GM10248 (cell line): ENCODE measurements at regions of chr16 and their contacts with region 1.

Region 1: GRCh38 chr16:77236063-77236511 is 36.9 kb downstream of the SYCE1L start:
- DNase-seq: peak; percentile 87
- CTCF ChIP-seq: peak; percentile 98

Region 2: GRCh38 chr16:77223184-77223583 is 12.9 kb before region 1 on chr16:
- CTCF ChIA-PET with region 1: interaction called, 17 read pairs
- POLR2A ChIA-PET with region 1: no interaction called
- DNase-seq: no peak
- CTCF ChIP-seq: peak; percentile 35

Region 3: GRCh38 chr16:77246150-77246549 is 10.1 kb after region 1 on chr16:
- CTCF ChIA-PET with region 1: interaction called, 20 read pairs
- POLR2A ChIA-PET with region 1: no interaction called
- DNase-seq: no peak
- CTCF ChIP-seq: no peak

Region 4: DNA sequence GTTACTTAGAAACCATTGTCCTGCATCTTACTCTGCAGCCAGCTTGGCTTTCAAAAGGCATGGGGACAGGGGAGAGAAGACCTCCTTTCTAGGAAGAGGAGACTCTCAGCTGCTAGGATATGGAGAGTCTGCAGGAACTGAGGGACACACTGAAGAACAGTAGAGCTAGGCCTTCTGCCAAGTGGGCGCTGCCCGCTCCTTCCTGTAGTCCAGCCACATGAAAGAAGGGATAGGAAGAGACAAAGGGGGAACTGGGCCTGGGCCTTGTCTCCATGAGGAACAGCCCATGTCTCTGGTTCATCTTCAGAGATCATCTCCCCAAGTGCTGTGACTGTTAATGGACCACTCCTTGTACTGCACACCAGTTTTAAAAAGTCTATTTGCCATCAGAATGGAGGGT is 41.5 kb after region 1 on chr16:
- CTCF ChIA-PET with region 1: no interaction called
- POLR2A ChIA-PET with region 1: no interaction called
- DNase-seq: no peak
- CTCF ChIP-seq: no peak

Region 5: GRCh38 chr16:77289331-77289809 is 53.3 kb after region 1 on chr16:
- CTCF ChIA-PET with region 1: no interaction called
- POLR2A ChIA-PET with region 1: no interaction called
- DNase-seq: no peak
- CTCF ChIP-seq: no peak

Region 6: DNA sequence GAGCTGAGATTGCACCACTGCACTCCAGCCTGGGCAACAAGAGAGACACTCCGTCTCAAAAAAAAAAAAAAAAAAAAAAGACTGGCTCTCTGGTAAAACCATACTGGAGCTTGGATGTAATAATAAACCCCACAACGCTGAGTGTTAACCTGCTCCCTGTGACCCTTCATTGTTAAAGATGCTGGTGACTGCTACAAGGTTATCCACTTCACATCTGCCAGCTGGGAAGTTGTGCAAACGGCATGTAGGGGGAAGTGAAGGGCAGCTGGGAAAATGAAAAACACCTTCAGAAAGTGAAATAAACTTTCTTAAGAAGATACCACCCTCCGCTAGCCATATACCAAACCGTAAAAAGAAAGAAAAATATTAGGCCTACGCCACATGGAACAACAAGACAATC is 355.3 kb after region 1 on chr16:
- CTCF ChIA-PET with region 1: interaction called, 184 read pairs
- POLR2A ChIA-PET with region 1: no interaction called
- DNase-seq: no peak
- CTCF ChIP-seq: no peak